ENCODE measurements at regions of chr9 and their contacts with region 1.

Region 1: DNA sequence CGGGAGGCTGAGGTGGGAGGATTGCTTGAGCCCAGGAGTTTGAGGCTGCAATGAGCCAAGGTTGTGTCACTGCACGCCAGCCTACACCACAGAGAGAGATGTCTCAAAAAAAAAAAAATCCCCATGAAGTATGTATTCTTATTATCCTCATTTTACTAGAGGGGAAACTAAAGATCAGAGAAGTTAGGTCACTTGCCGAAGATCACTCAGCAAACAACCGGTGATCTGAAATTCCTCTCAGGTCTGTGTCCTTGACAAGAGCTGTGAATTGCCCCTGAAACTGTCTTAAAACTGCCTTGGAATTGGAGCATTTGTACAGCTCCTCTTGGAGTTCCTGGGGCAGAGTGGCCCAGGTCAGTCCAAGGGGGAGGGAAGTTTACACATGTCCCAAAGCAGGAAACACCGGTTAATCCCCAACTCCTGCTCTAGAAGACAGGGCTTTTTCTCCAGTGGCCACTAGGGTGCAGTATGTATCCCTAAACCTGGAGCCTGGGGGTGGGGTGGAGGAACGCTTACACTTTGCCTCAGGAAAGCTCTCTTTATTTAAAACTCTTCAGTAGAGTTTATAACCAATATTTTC is 27.6 kb downstream of the AQP7 start:
- DNase-seq: peak; percentile 79 to 92
- H3K4me3 ChIP-seq: peak overlapping the region in 2 of 4 donors; percentile 13 to 24
- H3K27ac ChIP-seq: peak overlapping the region in 1 of 5 donors; percentile 52
- H3K4me1 ChIP-seq: peaks cover 11 to 29% (median 14%) of the 10 kb centered on the region in 4 donors
- H3K27me3 ChIP-seq: no peaks in the 10 kb centered on the region
- CTCF ChIP-seq: peak in 5 of 7 experiments; percentile 76 to 90 (median 82)
- EP300 ChIP-seq: no peak
- POLR2A ChIP-seq: no peak

Region 2: DNA sequence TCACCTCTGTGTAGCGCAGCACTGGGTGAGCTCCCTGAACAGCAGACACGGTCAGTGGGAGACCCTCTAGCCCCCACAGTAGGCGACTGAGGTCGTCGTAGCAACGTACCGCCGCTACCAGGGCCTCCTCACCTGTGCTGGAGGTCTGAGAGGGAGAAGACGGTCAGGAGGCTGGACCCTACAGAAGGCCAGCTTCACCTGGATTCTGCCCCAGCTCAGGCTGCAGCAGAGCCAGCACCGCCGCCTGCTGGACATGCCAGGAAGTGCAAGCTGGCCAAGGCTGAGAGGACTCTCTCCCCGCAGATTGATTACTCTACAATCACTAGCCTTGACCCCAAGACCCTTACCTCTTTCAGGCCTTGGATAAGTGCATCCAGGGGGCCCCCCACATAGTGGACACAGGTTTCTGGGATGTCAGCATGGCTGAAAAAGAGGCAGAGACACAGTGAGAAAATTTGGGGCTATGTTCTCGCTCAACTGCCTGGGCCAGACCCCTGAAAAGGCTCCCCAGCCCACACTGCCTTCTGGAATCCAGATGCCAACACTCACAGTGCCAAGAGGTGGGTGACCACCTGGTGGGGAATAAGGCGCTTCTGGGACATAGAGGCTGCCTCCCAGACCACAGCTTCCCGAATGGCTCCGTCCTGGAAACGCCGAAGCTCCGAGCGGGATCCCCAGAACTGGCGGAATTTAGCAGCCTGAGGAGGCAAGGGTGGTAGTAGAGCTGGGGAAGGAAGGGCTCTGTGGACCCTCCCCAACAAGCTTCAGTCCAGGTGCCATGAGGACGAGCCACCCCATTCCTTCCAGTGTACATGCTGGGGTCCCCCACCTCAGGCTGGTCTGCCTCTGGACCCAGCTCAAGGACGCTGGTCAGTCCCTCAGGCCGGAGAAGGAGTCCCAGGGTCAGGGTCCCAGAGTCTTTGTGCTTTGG is 92.1 kb after region 1 on chr9:
- intact Hi-C with region 1: loop called (anchors 10 kb)
- DNase-seq: peak; percentile 81 to 83
- H3K4me3 ChIP-seq: no peak overlapping the region
- H3K27ac ChIP-seq: no peak overlapping the region
- H3K4me1 ChIP-seq: peaks cover 2 to 10% (median 3%) of the 10 kb centered on the region in 4 donors
- H3K27me3 ChIP-seq: no peaks in the 10 kb centered on the region
- CTCF ChIP-seq: peak in 5 of 7 experiments; percentile 82 to 99 (median 98)
- EP300 ChIP-seq: no peak
- POLR2A ChIP-seq: no peak

Measured in stomach (tissue), 19 donors.